CD8-positive, alpha-beta T cell (primary cell): ENCODE measurements at regions of chr2 and their contacts with region 1.

Region 1: DNA sequence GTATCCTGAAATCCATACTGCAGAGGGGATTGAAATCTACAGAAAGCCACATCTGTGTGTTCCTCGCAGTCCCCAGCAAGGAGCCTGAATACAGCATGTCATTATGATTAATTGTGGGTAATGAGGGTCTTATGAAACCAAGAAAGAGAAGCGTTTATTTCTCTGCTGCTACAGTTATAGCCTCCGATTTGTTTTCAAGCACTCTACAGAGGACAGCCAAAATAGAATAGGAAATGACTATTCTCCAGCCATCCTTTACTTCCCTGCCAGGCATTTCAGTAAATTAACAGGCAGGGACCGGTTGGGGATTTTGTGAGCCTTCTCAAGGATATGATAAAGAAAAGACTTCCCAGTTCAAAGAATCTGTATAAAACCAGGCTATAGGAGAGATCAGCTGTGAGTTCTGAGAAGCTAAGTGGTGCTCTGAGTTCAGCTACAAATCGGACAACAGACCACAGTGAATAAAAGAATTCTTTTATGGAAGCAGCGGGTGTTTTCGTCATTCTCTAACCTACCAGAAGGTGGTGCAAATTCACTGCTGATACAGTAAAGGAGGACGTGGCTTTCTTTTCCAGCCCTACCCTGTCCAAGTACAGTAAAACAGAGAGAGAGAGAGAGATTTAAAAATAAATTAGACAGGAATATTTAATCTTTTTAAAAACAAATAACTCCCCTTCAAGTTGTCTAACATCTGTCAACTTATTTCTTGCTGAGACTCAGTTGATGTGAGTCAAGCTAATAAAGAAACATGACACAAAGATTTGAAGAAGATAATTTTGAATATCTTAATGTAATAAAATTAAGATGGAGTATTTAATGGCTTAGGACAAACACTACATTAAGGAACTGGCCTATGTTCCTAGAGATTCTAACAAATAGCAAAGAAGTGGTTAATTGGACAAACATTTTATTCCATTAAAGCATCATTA is 133.7 kb downstream of the INSIG2 start:
- DNase-seq: peak in 6 of 9 experiments; percentile 4 to 76 (median 32)
- ATAC-seq: peak; percentile 68
- H3K4me3 ChIP-seq: no peak overlapping the region
- H3K4me3 Mint-ChIP-seq: no peak overlapping the region
- H3K27ac ChIP-seq: no peak overlapping the region
- H3K27ac Mint-ChIP-seq: no peak overlapping the region
- H3K4me1 ChIP-seq: peaks cover 16% of the 10 kb centered on the region
- H3K4me1 Mint-ChIP-seq: peaks cover 19% of the 10 kb centered on the region
- H3K27me3 ChIP-seq: peaks cover 28 to 31% of the 10 kb centered on the region in 2 experiments
- H3K27me3 Mint-ChIP-seq: peaks cover 63% of the 10 kb centered on the region
- CTCF ChIP-seq: peak; percentile 80

Region 2: GRCh38 chr2:118056165-118056534 is 165.8 kb before region 1 on chr2:
- CTCF ChIA-PET with region 1: no interaction called
- POLR2A ChIA-PET with region 1: no interaction called
- intact Hi-C with region 1: no loop called
- DNase-seq: peak in 1 of 9 experiments; percentile 30
- ATAC-seq: no peak
- H3K4me3 ChIP-seq: no peak overlapping the region
- H3K4me3 Mint-ChIP-seq: no peak overlapping the region
- H3K27ac ChIP-seq: no peak overlapping the region
- H3K27ac Mint-ChIP-seq: no peak overlapping the region
- H3K4me1 ChIP-seq: no peaks in the 10 kb centered on the region
- H3K4me1 Mint-ChIP-seq: peaks cover 7% of the 10 kb centered on the region
- H3K27me3 ChIP-seq: peaks cover 0 to under 1% of the 10 kb centered on the region in 2 experiments
- H3K27me3 Mint-ChIP-seq: peaks cover 38% of the 10 kb centered on the region
- CTCF ChIP-seq: no peak

Region 3: GRCh38 chr2:118186110-118186857 is 35.6 kb before region 1 on chr2:
- CTCF ChIA-PET with region 1: interaction called, 4 read pairs
- POLR2A ChIA-PET with region 1: no interaction called
- intact Hi-C with region 1: loop called in 1 of 2 experiments (anchors 5 kb)
- DNase-seq: peak; percentile 66 to 94 (median 88)
- ATAC-seq: peak; percentile 92
- H3K4me3 ChIP-seq: peak overlapping the region; percentile 81 to 93
- H3K4me3 Mint-ChIP-seq: peak overlapping the region; percentile 94
- H3K27ac ChIP-seq: peak overlapping the region; percentile 73 to 79
- H3K27ac Mint-ChIP-seq: peak overlapping the region; percentile 94
- H3K4me1 ChIP-seq: peaks cover 9% of the 10 kb centered on the region
- H3K4me1 Mint-ChIP-seq: peaks cover 17% of the 10 kb centered on the region
- H3K27me3 ChIP-seq: no peaks in the 10 kb centered on the region
- H3K27me3 Mint-ChIP-seq: no peaks in the 10 kb centered on the region
- CTCF ChIP-seq: no peak

Region 4: DNA sequence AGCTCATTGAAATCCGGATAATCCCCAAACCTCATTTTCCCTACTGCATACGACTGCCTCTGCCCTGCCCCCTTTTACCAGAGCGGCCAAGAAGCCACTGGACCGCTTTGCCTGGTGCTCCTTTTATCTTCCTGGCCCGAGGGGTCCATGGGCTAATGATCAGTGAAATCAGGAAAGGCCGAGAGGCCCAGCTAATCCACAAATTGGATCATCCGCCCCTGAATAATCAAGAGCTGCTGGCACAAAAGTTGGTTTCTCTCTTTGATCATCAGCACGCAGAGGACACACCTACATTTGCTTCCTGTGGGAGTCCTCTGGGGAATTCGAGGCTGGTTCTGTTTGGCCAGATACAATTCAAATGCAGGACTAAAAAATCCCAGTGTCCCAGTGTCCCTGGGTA is 10.9 kb after region 1 on chr2:
- CTCF ChIA-PET with region 1: interaction called, 10 read pairs
- POLR2A ChIA-PET with region 1: interaction called, 3 read pairs
- intact Hi-C with region 1: no loop called
- DNase-seq: no peak
- ATAC-seq: no peak
- H3K4me3 ChIP-seq: no peak overlapping the region
- H3K4me3 Mint-ChIP-seq: no peak overlapping the region
- H3K27ac ChIP-seq: no peak overlapping the region
- H3K27ac Mint-ChIP-seq: no peak overlapping the region
- H3K4me1 ChIP-seq: no peaks in the 10 kb centered on the region
- H3K4me1 Mint-ChIP-seq: no peaks in the 10 kb centered on the region
- H3K27me3 ChIP-seq: peaks cover 0 to 4% of the 10 kb centered on the region in 2 experiments
- H3K27me3 Mint-ChIP-seq: peaks cover 34% of the 10 kb centered on the region
- CTCF ChIP-seq: no peak

Region 5: GRCh38 chr2:118855451-118856279 is 633.7 kb after region 1 on chr2:
- CTCF ChIA-PET with region 1: interaction called, 50 read pairs
- POLR2A ChIA-PET with region 1: no interaction called
- intact Hi-C with region 1: loop called (anchors 1 kb)
- DNase-seq: peak; percentile 69 to 87 (median 79)
- ATAC-seq: peak; percentile 88
- H3K4me3 ChIP-seq: peak overlapping the region; percentile 23 to 53
- H3K4me3 Mint-ChIP-seq: peak overlapping the region; percentile 73
- H3K27ac ChIP-seq: no peak overlapping the region
- H3K27ac Mint-ChIP-seq: no peak overlapping the region
- H3K4me1 ChIP-seq: peaks cover 27% of the 10 kb centered on the region
- H3K4me1 Mint-ChIP-seq: peaks cover 18% of the 10 kb centered on the region
- H3K27me3 ChIP-seq: peaks cover 47 to 57% of the 10 kb centered on the region in 2 experiments
- H3K27me3 Mint-ChIP-seq: peaks cover 65% of the 10 kb centered on the region
- CTCF ChIP-seq: peak; percentile 85

Region 6: DNA sequence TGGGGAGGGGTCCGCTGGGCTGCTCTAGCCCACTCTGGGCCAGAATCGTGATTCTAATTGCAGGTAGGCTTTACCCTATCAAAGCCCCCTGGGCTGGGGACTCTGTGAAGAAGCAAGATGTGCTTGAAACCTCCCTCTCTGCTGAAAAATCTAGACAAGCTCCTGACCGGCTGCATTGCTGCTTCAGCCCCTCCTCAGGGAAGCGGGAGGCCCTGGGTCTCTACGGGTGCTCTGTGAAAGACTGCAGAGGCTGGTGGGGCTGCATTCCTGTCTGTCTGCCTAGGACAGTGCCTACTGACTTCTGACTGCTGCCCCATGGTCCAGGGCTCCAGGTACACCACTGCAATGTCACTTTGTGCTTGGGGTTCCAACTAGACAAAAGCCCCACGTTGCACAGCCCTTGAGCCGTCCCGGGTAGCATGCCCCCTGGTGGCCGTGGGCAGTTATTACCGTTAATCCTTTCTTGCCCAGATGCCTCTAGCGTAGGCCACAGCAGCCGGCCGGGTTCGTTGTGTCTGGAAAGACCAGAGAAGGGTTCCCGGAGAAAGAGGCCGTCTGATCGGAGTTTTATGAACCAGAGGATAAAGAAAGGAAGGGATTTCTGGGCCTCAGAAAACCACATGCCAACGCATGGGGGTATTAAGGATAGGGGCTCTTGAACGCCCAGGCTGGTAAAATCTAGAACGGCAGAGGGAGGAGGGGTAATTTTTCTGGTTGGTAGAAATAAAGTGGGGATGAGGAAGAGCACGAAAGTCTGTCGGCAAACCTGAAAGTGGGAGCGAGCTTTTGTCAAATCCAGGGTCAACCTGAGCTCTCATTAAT is 952.5 kb after region 1 on chr2:
- CTCF ChIA-PET with region 1: no interaction called
- POLR2A ChIA-PET with region 1: no interaction called
- intact Hi-C with region 1: loop called (anchors 2 kb)
- DNase-seq: peak; percentile 25 to 76 (median 50)
- ATAC-seq: no peak
- H3K4me3 ChIP-seq: no peak overlapping the region
- H3K4me3 Mint-ChIP-seq: no peak overlapping the region
- H3K27ac ChIP-seq: no peak overlapping the region
- H3K27ac Mint-ChIP-seq: no peak overlapping the region
- H3K4me1 ChIP-seq: no peaks in the 10 kb centered on the region
- H3K4me1 Mint-ChIP-seq: no peaks in the 10 kb centered on the region
- H3K27me3 ChIP-seq: no peaks in the 10 kb centered on the region
- H3K27me3 Mint-ChIP-seq: no peaks in the 10 kb centered on the region
- CTCF ChIP-seq: peak; percentile 73

Region 7: DNA sequence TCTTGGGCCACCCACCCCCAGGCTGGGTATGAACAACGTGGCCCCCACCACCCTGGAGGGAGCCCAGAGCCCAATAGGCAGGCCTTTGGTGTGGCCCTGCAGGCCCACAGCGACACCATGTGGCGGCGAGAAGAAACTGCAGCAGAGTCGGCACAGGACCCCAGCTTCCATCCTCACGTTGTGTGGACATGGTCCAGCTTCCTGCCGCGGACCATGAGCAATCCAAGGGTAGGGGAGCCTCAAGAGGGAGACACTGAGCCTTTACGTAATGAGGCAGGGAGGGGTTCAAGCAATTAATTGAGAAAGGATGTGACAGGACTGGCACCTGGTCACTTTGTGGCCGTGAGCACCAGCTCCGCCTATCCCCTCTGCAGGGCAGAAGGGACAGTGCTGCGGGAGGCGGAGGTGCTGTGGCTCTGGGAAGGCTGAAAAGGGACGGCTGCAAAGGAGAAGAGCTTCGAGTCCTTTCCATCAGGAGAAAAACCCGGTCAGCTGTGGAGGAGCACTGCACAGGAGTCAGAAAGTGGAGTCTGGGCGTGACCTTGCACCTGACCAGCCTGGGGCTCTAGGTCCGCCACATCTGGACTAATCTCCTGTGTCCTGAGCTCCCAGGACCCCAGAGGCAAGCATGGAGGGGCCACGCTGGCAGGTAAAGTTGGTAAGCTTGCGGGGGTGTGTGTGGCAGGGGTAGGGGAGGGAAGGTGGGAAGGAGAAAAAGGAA is 1254.5 kb after region 1 on chr2:
- CTCF ChIA-PET with region 1: no interaction called
- POLR2A ChIA-PET with region 1: no interaction called
- intact Hi-C with region 1: loop called in 1 of 2 experiments (anchors 5 kb)
- DNase-seq: peak in 7 of 9 experiments; percentile 8 to 60 (median 22)
- ATAC-seq: no peak
- H3K4me3 ChIP-seq: no peak overlapping the region
- H3K4me3 Mint-ChIP-seq: no peak overlapping the region
- H3K27ac ChIP-seq: no peak overlapping the region
- H3K27ac Mint-ChIP-seq: no peak overlapping the region
- H3K4me1 ChIP-seq: no peaks in the 10 kb centered on the region
- H3K4me1 Mint-ChIP-seq: no peaks in the 10 kb centered on the region
- H3K27me3 ChIP-seq: peaks cover 0 to 5% of the 10 kb centered on the region in 2 experiments
- H3K27me3 Mint-ChIP-seq: peaks cover 13% of the 10 kb centered on the region
- CTCF ChIP-seq: peak; percentile 74